Right ventricle myocardium superior (tissue), 1 donor: ENCODE measurements at regions of chr21 and their contacts with region 1.

Region 1: GRCh38 chr21:35528116-35529042 is 479.3 kb upstream of the RUNX1 start:
- DNase-seq: peak; percentile 49
- ATAC-seq: peak; percentile 48

Region 2: GRCh38 chr21:35113064-35113463 is 415.3 kb before region 1 on chr21:
- intact Hi-C with region 1: no loop called
- DNase-seq: no peak
- ATAC-seq: no peak

Region 3: DNA sequence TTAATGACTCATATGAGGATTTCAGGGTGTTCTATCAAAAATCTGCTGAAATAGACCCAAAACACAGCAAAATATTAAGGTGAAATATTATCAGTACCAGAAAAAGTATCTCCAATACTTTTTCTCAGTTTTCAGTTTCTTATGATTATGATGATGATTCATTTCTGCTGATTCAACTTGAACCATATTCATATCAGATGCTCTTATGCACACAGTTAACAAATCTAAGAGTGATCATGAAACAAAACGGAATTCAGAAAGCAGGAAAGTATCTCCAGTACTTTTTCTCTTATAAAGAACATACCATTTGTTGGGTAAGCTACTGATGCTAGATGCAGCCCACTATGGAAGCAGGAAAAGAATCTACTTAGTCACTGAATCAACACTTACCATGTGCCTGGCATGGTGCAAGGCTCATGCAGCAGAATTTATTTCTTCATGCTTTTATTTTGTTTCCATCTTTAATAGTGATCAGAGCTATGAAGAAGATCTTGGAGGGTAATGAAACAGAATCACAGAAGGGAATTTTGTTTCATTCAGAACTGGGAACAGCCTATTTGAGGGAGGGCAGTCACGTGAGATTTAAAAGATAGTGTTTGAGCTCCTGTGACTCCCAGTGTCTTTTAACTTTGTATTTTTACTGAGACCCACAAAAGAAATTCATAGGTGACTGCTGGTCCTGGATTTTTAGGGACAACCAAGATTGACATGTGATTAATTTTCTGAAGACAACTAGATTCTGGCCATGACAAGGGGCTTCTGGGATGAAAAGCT is 51.3 kb after region 1 on chr21:
- intact Hi-C with region 1: loop called (anchors 10 kb)
- DNase-seq: no peak
- ATAC-seq: no peak